ENCODE measurements at regions of chr1 and their contacts with region 1.

Region 1: DNA sequence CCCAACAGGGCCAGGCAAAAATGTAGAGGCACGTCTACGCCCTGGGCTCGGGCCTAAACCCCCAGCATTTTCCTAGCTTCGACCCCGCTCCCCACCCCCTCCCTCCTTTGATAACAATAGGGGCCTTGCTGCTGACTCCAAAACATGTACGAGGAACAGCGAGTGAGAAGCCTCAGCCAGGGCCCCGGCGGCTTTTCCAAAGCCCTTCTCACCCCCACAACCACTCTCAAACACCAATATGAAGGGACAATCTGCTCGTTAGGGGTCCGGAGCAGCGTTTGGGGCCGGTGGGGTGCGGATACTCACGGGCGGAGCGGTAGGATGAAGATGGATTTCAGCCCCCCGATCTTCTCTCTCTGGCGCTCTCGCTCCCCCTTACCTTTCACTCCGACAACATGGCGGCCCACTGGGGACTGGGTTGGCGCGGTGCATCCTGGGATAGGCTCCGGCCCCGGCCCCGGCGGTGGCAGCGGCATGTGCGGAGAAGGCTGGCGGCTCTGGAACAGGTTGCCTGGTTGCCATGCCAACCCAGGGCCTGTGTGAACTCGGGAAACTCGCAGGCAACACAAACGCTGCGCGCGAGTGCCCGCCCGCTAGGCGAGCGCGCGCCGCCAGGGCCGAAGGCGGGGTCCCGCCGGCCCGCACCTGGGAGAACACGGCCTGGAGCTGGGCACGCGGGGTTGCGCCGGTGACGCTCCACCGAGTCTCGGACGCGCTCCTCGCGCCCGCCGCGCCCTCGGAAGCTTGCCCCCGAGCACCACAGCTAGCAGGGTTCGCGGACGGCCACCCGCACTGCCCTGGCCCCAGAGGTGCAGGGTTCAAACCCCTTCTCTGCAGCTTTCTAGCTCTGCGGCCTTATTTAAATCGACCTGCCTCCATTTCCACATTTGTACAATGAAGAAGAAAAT is at the start of gene PUM1:
- DNase-seq: peak; percentile 96 to 99 (median 98)
- ATAC-seq: peak; percentile 96
- H3K4me3 ChIP-seq: peak within 1 kb of the TSS; percentile 71
- H3K4me3 Mint-ChIP-seq: peak within 1 kb of the TSS; percentile 93
- H3K27ac ChIP-seq: peak within 1 kb of the TSS; percentile 89 to 92
- H3K27ac Mint-ChIP-seq: peak within 1 kb of the TSS; percentile 95
- H3K4me1 ChIP-seq: peaks cover 29% of the 10 kb centered on the region
- H3K4me1 Mint-ChIP-seq: peaks cover 34% of the 10 kb centered on the region
- H3K27me3 ChIP-seq: no peaks in the 10 kb centered on the region
- H3K27me3 Mint-ChIP-seq: no peaks in the 10 kb centered on the region
- CTCF ChIP-seq: no peak
- total RNA-seq, gene PUM1: 190 to 202 TPM

Region 2: DNA sequence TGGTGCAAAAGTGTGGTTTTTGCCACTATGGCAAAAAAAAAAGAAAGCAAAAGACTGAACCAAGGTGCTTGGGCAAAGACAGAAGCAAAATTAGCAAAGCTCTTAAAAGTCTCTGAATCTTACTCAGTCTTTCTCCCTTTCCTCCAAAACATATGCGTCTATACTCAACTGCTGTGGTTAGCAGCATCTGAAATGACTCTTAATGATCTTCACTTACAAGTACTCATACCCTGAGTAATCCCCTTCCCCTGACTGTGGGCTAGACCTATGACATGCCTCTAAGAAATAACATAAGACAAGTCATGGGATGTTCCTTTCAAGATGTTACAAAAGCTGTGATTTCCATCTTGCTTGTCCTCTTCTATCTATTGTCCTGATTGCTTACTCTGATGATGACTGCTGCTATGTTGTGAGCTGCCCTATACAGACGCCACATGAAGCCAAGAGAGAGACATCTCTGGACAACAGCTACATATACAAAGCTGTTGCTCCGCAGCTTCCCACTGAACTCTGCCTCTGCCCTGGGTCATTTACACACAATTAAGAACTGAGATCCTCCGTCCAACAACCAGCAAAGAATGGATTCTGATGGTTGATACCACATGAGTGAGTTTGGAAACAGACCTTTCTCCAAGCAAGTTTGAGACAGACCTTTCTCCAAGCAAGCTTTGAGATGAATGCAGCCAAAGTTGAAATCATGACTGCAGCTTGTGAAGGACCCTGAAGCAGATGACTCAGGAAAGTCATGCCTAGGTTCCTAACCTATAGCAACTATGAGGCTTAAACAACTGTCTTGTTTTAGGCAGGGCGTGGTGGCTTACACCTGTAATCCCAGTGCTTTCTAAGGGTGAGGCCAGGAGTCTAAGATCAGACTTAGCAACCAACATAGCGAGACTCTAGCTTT is 55.2 kb before region 1 on chr1:
- CTCF ChIA-PET with region 1: no interaction called
- POLR2A ChIA-PET with region 1: interaction called, 5 read pairs
- intact Hi-C with region 1: loop called in 1 of 2 experiments (anchors 5 kb)
- DNase-seq: peak in 3 of 14 experiments; percentile 14 to 33 (median 20)
- ATAC-seq: peak; percentile 81
- H3K4me3 ChIP-seq: no peak overlapping the region
- H3K4me3 Mint-ChIP-seq: no peak overlapping the region
- H3K27ac ChIP-seq: no peak overlapping the region
- H3K27ac Mint-ChIP-seq: peak overlapping the region; percentile 46
- H3K4me1 ChIP-seq: peaks cover 21% of the 10 kb centered on the region
- H3K4me1 Mint-ChIP-seq: peaks cover 69% of the 10 kb centered on the region
- H3K27me3 ChIP-seq: no peaks in the 10 kb centered on the region
- H3K27me3 Mint-ChIP-seq: no peaks in the 10 kb centered on the region
- CTCF ChIP-seq: no peak

Region 3: GRCh38 chr1:31155216-31155841 is 89.8 kb after region 1 on chr1:
- CTCF ChIA-PET with region 1: no interaction called
- POLR2A ChIA-PET with region 1: interaction called, 3 read pairs
- intact Hi-C with region 1: loop called in 1 of 2 experiments (anchors 2 kb)
- DNase-seq: peak; percentile 14 to 78 (median 32)
- ATAC-seq: peak; percentile 81
- H3K4me3 ChIP-seq: peak overlapping the region; percentile 66
- H3K4me3 Mint-ChIP-seq: peak overlapping the region; percentile 89
- H3K27ac ChIP-seq: no peak overlapping the region
- H3K27ac Mint-ChIP-seq: peak overlapping the region; percentile 40
- H3K4me1 ChIP-seq: peaks cover 14% of the 10 kb centered on the region
- H3K4me1 Mint-ChIP-seq: peaks cover 12% of the 10 kb centered on the region
- H3K27me3 ChIP-seq: no peaks in the 10 kb centered on the region
- H3K27me3 Mint-ChIP-seq: no peaks in the 10 kb centered on the region
- CTCF ChIP-seq: peak; percentile 35

Region 4: GRCh38 chr1:31296486-31297276 is 231.1 kb after region 1 on chr1 and contains the starts of genes SNRNP40 and ZCCHC17:
- CTCF ChIA-PET with region 1: no interaction called
- POLR2A ChIA-PET with region 1: interaction called, 5 read pairs
- intact Hi-C with region 1: loop called in 1 of 2 experiments (anchors 2 kb)
- DNase-seq: peak; percentile 84 to 99 (median 90)
- ATAC-seq: peak; percentile 94
- H3K4me3 ChIP-seq: peak within 1 kb of the TSS; percentile 90
- H3K4me3 Mint-ChIP-seq: no peak within 1 kb of the TSS
- H3K27ac ChIP-seq: peak within 1 kb of the TSS; percentile 83 to 91
- H3K27ac Mint-ChIP-seq: no peak within 1 kb of the TSS
- H3K4me1 ChIP-seq: peaks cover 41% of the 10 kb centered on the region
- H3K4me1 Mint-ChIP-seq: peaks cover 13% of the 10 kb centered on the region
- H3K27me3 ChIP-seq: no peaks in the 10 kb centered on the region
- H3K27me3 Mint-ChIP-seq: no peaks in the 10 kb centered on the region
- CTCF ChIP-seq: no peak
- total RNA-seq, gene SNRNP40: 48.4 to 53.7 TPM
- total RNA-seq, gene ZCCHC17: 7.3 to 7.6 TPM

Measured in CD4-positive, alpha-beta T cell (primary cell).